ENCODE measurements at regions of chr14 and their contacts with region 1.

Region 1: DNA sequence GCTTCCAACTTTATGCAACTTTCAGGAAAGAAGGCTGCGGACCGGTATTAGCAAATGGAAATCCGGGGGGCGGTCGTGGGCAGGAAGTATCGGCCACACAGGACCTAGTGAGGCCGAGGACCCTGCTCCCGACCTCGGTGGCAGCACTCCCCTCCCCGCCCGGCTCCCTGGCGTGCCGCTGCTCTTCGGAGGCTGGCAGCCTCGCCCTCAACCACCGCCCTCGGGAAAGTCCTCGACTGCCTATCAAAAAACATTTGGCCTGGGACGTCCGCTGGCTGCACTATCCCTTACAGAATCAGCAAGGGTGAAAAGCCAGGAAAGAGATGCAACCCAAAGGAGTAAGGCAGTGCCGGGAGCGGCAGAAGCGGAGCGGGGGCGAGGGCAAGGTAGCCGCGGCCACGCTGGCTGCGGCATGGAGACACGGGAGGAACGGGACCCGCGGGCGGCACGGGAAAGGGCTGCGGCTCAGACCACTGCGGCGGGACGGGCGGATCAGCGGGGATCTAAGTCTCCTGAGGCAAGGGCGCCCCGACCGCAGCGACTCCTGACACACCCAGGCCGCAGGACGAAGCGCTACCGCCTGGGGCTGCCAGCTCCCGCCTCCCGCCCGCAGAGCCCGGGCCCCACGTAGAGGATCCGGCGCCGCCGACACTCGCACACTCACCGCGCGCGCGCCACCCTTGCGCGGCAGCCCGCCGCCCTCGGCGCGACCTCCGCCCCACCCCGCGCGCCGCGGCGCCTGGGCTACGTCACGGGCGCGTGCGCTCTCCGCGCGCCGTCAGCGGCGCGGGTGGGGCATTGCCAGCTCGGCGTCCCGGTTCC is at the starts of genes BBOF1 and ENTPD5:
- DNase-seq: peak; percentile 74 to 98 (median 85)

Region 2: GRCh38 chr14:73949744-73950734 is 68.8 kb before region 1 on chr14 and contains the starts of genes COQ6 and FAM161B:
- intact Hi-C with region 1: loop called (anchors 2 kb)
- DNase-seq: peak; percentile 89 to 99 (median 94)

Region 3: DNA sequence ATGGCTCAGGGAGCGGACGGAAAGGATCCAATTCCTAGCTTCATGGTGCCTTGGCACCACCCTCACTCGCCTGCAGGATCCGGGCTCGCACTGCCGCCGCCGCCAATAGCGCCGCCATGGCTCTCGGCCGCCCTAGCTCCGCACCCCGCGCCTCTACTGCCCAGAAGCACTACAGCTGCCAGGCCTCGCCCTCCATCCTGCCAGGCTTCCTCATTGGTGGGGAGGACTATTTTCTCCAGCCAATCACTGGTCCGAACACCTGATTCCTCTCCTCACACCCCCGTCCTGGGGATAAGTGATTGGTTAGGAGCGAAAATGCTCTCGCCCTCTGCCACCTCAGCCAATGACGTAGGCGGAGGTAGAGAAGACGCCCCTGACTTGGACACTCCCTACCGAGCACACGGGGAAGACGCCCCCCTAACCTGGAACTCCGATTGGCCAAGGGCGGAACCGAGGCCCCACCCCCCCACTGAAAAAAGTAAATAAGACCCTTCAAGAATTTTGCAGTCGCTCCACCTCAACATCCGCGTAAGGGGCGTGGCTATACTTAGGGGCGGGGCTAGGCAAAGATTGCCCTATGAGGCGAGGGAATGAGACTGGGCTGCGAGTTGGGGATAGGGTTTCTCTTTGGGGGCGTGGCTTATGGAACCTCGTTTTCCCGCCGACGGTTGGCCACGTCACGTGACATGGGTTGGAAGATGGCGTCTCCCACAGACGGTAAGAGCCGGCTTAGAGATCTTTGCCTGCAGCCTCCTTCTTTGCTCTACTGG is 65.7 kb after region 1 on chr14 and contains the starts of genes ALDH6A1 and LIN52:
- intact Hi-C with region 1: loop called (anchors 2 kb)
- DNase-seq: peak; percentile 95 to 100 (median 98)

Region 4: GRCh38 chr14:74655599-74656389 is 637.0 kb after region 1 on chr14:
- intact Hi-C with region 1: no loop called
- DNase-seq: no peak

Measured in posterior cingulate gyrus (tissue), 11 donors.